AG04449 (cell line): ENCODE measurements at regions of chr11 and their contacts with region 1.

Region 1: DNA sequence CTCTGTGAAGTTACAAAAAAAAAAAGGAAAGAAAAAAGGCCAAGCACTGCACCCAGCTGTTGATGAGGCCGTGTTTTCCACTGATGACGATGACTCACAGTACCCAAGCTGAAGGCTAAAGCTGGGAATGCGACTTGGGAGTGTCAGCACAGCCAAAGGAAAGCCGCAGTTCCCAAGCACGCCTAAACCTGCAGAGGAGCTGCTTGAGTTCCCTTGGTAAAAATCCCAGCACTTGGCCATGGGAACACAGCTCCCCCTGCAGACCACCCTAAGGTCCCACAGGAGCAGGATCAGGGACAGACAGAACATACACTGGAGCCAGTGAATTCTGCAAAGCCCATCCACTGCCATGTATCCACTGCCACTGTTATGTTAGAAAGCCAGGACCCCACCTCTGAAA is 39.9 kb downstream of the SERGEF start:
- DNase-seq: peak; percentile 46
- H3K4me3 ChIP-seq: no peak overlapping the region
- CTCF ChIP-seq: peak; percentile 89

Region 2: GRCh38 chr11:17760102-17761029 is 212.6 kb before region 1 on chr11:
- CTCF ChIA-PET with region 1: interaction called, 101 read pairs
- POLR2A ChIA-PET with region 1: no interaction called
- DNase-seq: no peak
- H3K4me3 ChIP-seq: no peak overlapping the region
- CTCF ChIP-seq: peak; percentile 60

Region 3: DNA sequence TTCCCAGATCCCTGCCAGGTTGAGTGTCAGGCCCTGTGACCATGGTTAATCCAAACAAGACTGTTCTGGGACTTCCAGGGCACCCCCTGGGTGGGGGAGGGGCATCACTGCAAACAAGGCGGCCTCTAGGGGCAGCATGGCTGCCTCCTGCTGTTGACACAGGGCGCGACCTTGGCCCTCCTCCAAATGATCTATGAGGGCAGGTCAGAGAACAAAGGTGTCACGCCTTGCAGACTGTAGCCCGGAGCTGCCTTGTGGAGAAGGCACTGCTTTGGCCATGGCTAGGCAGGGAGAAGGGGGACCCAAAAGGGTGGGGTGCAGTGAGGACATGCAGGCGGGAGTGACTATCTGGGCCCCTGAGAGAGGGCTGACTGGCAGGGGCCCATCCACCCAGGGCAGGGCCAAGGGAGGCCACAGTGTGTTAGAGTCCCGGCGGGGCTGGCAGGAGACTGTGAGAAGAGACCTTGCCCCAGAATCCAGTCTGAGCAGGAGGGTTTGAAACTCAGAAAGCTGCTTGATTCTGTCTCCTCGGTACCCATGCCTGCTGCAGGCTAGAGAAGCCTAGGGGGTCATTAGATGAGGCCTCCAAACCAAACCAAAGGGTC is 202.8 kb before region 1 on chr11:
- CTCF ChIA-PET with region 1: interaction called, 53 read pairs
- POLR2A ChIA-PET with region 1: no interaction called
- DNase-seq: no peak
- H3K4me3 ChIP-seq: no peak overlapping the region
- CTCF ChIP-seq: no peak

Region 4: GRCh38 chr11:17991783-17992433 is 18.9 kb after region 1 on chr11:
- CTCF ChIA-PET with region 1: interaction called, 127 read pairs
- POLR2A ChIA-PET with region 1: no interaction called
- DNase-seq: no peak
- H3K4me3 ChIP-seq: no peak overlapping the region
- CTCF ChIP-seq: peak; percentile 71